Activated naive CD4-positive, alpha-beta T cell treated with anti-CD3 and anti-CD28 coated beads for 36 hours (primary cell): ENCODE measurements at regions of chr1 and their contacts with region 1.

Region 1: GRCh38 chr1:27111626-27112573 is 43.0 kb downstream of the SLC9A1 start:
- DNase-seq: peak; percentile 90
- H3K4me3 Mint-ChIP-seq: no peak overlapping the region
- H3K27ac Mint-ChIP-seq: peak overlapping the region; percentile 71
- H3K4me1 Mint-ChIP-seq: peaks cover 50% of the 10 kb centered on the region
- H3K27me3 Mint-ChIP-seq: no peaks in the 10 kb centered on the region

Region 2: GRCh38 chr1:27136998-27137542 is 25.2 kb after region 1 on chr1:
- CTCF ChIA-PET with region 1: interaction called, 7 read pairs
- intact Hi-C with region 1: loop called (anchors 2 kb)
- DNase-seq: peak; percentile 95
- H3K4me3 Mint-ChIP-seq: peak overlapping the region; percentile 80
- H3K27ac Mint-ChIP-seq: peak overlapping the region; percentile 99
- H3K4me1 Mint-ChIP-seq: peaks cover 52% of the 10 kb centered on the region
- H3K27me3 Mint-ChIP-seq: no peaks in the 10 kb centered on the region

Region 3: DNA sequence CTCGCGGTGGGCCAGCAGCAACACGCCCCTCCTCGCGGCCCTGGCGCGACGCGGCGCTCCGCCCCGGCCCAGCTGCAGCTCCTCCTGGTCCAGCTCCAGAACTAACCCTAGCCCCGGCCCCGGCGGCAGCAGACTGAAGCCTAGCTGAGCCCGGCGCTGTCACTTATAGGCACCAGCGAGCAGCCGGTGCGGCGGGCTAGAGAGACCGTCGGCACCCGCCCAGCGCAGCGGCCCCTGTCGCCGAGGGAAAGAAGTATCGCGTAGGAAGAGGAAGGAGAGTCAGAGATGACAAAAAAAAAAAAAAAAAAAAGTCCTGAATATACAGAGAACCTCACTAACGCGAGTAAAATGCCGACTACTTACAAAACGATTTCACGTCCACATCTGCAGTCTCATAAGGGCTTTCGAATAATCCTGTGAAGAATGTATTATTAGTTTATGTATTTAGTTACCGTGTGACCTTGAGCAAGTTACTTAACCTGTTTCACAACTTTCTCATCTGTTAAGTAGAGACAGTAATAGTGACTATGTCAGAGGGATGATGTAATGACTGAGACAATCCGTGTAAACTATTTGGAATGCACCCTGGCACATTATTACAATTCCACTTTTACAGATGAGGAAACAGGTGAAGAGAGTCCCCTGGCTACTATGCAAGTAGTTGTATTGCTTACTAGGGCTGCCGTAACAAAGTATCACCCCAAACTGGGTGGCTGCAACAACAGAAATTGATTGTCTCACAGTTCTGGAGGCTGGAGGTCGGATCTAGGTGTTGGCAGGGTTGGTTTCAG is 43.3 kb after region 1 on chr1 and contains the start of gene SLC9A1:
- CTCF ChIA-PET with region 1: interaction called, 19 read pairs
- intact Hi-C with region 1: loop called (anchors 1 kb)
- DNase-seq: peak; percentile 91
- H3K4me3 Mint-ChIP-seq: peak within 1 kb of the TSS; percentile 89
- H3K27ac Mint-ChIP-seq: peak within 1 kb of the TSS; percentile 98
- H3K4me1 Mint-ChIP-seq: peaks cover 47% of the 10 kb centered on the region
- H3K27me3 Mint-ChIP-seq: no peaks in the 10 kb centered on the region
- total RNA-seq, gene SLC9A1: 15.4 to 16.5 TPM

Region 4: GRCh38 chr1:27192039-27192529 is 80.2 kb after region 1 on chr1:
- CTCF ChIA-PET with region 1: interaction called, 15 read pairs
- intact Hi-C with region 1: no loop called
- DNase-seq: no peak
- H3K4me3 Mint-ChIP-seq: no peak overlapping the region
- H3K27ac Mint-ChIP-seq: no peak overlapping the region
- H3K4me1 Mint-ChIP-seq: no peaks in the 10 kb centered on the region
- H3K27me3 Mint-ChIP-seq: no peaks in the 10 kb centered on the region

Region 5: DNA sequence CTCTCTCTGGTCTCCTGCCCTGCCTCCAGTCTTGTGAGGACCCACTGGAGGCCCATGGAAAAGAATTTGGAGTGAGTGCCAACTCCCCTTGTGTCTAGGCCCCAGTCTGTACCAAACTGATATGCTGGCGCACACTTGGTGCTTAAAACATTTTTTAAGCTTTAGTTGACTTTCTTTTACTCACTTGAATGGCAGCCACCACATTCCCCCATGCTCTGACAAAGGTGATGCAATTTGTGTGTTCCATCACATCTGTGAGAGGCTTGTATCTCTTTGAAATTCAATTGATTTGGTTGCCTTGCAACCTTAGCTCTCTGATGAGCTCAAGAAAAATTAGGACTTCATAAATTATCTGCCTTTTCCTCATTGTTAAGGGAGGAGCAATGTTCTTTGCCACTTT is 92.0 kb after region 1 on chr1:
- CTCF ChIA-PET with region 1: interaction called, 15 read pairs
- intact Hi-C with region 1: loop called (anchors 2 kb)
- DNase-seq: no peak
- H3K4me3 Mint-ChIP-seq: no peak overlapping the region
- H3K27ac Mint-ChIP-seq: no peak overlapping the region
- H3K4me1 Mint-ChIP-seq: no peaks in the 10 kb centered on the region
- H3K27me3 Mint-ChIP-seq: no peaks in the 10 kb centered on the region

Region 6: DNA sequence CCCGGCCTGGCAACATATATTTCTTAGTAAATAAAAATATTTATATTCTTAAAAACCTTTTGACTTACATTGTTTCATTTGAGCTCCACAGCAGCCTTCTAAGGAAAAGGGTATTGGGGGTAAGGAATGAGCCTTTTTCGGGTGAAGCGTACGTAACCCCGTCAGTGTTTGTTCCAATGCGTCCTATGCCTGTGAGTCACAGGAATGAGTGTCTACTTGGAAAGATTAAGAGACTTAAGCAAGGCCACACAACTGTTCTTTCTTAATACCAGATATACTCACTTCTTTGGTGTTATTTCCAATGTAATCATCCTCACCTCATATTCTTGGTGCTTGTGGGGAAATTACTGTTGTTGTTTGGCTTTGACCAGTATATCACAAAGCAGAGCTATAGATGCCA is 145.3 kb after region 1 on chr1:
- CTCF ChIA-PET with region 1: no interaction called
- intact Hi-C with region 1: no loop called
- DNase-seq: no peak
- H3K4me3 Mint-ChIP-seq: no peak overlapping the region
- H3K27ac Mint-ChIP-seq: no peak overlapping the region
- H3K4me1 Mint-ChIP-seq: peaks cover 56% of the 10 kb centered on the region
- H3K27me3 Mint-ChIP-seq: no peaks in the 10 kb centered on the region